ENCODE measurements at regions of chr12 and their contacts with region 1.

Region 1: DNA sequence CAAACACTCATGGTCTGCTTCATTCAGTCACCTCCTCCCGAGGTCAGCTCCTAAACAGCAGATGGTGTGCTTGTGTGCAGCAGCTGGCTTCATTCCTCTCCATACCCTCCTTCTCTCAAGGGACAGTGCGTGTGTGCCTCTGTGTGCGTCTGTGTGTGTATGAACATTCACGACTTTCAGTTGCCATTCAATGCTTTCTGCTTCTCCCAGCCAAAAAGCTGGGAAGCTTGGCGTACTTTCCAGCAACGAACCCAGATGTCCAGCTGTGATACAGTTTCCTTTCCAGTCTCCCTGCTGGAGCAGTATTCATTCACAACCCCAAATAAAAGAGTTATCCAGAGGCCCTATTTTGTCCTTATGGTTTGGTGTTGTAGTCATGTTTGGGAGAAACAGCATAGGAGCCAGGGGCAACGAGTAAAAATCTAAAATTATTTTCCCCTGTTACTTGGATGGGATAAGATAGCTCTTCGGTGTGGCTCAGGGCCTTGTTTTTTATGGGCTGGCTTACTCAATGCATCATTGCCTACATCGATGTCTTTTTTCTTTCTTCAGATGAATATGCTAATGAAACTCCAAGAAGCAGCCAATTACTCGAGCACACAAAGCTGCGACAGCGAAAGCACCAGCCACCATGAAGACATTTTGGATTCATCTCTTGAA is 379.3 kb downstream of the NAV3 start:
- DNase-seq: peak; percentile 23 to 89 (median 46)

Region 2: GRCh38 chr12:78146365-78146772 is 63.6 kb before region 1 on chr12:
- intact Hi-C with region 1: loop called (anchors 10 kb)
- DNase-seq: no peak